Activated CD8-positive, alpha-beta T cell treated with anti-CD3 and anti-CD28 coated beads for 36 hours (primary cell): ENCODE measurements at regions of chr16 and their contacts with region 1.

Region 1: GRCh38 chr16:84726079-84726668 is 26.4 kb downstream of the USP10 start:
- DNase-seq: peak; percentile 92
- ATAC-seq: no peak
- H3K4me3 Mint-ChIP-seq: peak overlapping the region; percentile 25
- H3K27ac Mint-ChIP-seq: no peak overlapping the region
- H3K4me1 Mint-ChIP-seq: peaks cover 78% of the 10 kb centered on the region
- H3K27me3 Mint-ChIP-seq: no peaks in the 10 kb centered on the region
- CTCF ChIP-seq: peak; percentile 100

Region 2: DNA sequence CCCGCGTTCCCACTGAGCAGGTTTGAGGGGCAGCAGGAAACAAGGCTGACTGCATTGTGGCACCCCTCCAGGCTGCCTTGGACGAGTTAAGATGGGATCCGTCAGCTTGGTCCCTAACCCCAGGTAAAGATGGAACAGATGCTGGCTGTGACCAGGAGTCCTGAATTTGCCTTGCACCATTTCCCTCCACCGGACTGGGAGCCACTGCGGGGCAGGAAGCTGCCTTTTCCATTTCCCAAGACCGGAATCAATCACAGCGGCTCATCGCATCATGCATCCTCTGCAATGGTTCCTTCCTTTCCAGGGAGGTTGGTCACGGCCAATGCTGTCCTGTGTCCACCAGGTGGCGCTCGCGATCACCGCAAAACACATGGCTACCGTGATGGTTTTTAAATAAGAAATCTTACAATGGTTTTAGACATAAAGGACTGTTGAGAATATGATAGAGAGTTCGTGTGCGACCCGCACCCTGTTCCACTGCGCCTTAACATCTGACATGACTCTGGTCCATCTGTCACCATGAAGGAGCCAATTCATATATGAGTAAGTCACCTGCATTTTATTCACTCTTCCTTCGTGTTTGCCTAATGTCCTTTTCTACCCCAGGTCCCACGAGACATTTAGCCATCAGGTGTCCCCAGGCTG is 214.9 kb before region 1 on chr16:
- CTCF ChIA-PET with region 1: interaction called, 11 read pairs
- POLR2A ChIA-PET with region 1: no interaction called
- intact Hi-C with region 1: loop called (anchors 10 kb)
- DNase-seq: peak; percentile 92
- ATAC-seq: peak; percentile 9
- H3K4me3 Mint-ChIP-seq: peak overlapping the region; percentile 39
- H3K27ac Mint-ChIP-seq: peak overlapping the region; percentile 80
- H3K4me1 Mint-ChIP-seq: peaks cover 74% of the 10 kb centered on the region
- H3K27me3 Mint-ChIP-seq: no peaks in the 10 kb centered on the region
- CTCF ChIP-seq: peak; percentile 94

Region 3: DNA sequence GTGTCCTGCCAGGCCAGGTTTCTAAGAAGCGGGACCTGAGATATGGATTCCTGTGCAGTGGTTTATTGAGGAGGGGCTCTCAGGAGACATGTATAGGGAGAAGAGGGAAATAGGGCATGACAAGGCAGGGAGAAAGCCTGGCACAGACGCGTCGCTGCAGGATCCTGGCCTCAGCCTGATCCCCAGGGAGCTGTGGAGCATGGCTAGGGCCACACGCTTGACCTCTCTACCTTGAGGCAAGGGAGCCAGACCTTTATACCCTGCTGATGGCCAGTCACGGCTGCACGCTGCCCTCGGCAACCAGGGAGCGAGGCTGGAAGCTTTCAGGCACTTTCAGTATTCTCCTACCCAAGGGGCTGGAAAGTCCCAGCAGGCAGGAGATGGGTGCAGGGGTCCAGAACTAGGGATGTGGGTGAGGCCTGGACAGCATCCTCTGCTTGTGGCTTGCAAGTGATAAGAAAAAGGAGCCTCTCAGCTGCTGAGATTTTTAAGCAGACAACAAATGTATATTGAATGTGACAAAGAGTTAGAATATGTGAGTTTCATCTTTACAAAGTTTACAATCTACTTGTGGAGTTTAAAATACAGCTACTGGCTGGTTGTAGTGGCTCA is 87.9 kb before region 1 on chr16:
- CTCF ChIA-PET with region 1: interaction called, 10 read pairs
- POLR2A ChIA-PET with region 1: interaction called, 3 read pairs
- intact Hi-C with region 1: no loop called
- DNase-seq: no peak
- ATAC-seq: no peak
- H3K4me3 Mint-ChIP-seq: no peak overlapping the region
- H3K27ac Mint-ChIP-seq: no peak overlapping the region
- H3K4me1 Mint-ChIP-seq: peaks cover 31% of the 10 kb centered on the region
- H3K27me3 Mint-ChIP-seq: no peaks in the 10 kb centered on the region
- CTCF ChIP-seq: no peak

Region 4: DNA sequence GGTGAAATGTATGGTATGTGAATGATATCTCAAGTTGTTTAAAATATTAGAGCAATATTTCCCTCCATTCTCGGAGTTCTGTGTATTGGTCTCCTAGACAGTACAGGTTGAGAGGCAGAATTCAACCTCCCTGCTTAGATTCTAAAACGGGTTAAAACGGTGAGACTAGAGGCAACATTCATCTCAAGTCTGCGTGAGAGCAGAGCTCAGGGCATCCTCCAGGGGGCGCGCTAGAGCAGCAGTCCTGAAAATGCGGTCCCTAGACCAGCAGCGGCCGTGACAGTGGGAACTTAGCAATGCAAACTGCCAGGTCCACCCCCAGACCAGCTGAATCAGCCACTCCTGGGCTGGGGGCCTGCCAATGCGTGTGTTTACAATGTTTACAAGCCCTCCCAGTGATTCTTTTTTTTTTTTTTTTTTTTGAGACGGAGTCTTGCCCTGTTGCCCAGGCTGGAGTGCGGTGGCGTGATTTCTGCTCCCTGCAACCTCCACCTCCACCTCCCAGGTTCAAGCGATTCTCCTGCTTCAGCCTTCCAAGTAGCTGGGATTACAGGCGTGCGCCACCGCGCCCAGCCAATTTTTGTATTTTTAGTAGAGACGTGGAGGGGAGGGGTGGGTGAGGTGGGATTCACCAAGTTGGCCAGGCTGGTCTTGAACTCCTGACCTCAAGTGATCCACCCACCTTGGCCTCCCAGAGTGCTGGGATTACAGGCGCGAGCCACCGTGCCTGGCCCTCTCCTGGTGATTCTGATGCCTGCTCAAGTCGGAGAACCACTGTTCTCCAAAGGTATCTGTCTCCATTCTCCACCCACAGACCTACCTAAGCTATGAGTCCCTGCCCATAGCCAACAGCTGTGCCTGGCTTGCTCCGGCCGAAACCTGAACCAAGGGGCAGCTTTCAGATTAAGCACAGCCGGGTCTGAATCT is 53.6 kb before region 1 on chr16:
- CTCF ChIA-PET with region 1: interaction called, 70 read pairs
- POLR2A ChIA-PET with region 1: interaction called, 3 read pairs
- intact Hi-C with region 1: loop called (anchors 1 kb)
- DNase-seq: peak; percentile 86
- ATAC-seq: peak; percentile 97
- H3K4me3 Mint-ChIP-seq: no peak overlapping the region
- H3K27ac Mint-ChIP-seq: no peak overlapping the region
- H3K4me1 Mint-ChIP-seq: peaks cover 6% of the 10 kb centered on the region
- H3K27me3 Mint-ChIP-seq: no peaks in the 10 kb centered on the region
- CTCF ChIP-seq: peak; percentile 90

Region 5: DNA sequence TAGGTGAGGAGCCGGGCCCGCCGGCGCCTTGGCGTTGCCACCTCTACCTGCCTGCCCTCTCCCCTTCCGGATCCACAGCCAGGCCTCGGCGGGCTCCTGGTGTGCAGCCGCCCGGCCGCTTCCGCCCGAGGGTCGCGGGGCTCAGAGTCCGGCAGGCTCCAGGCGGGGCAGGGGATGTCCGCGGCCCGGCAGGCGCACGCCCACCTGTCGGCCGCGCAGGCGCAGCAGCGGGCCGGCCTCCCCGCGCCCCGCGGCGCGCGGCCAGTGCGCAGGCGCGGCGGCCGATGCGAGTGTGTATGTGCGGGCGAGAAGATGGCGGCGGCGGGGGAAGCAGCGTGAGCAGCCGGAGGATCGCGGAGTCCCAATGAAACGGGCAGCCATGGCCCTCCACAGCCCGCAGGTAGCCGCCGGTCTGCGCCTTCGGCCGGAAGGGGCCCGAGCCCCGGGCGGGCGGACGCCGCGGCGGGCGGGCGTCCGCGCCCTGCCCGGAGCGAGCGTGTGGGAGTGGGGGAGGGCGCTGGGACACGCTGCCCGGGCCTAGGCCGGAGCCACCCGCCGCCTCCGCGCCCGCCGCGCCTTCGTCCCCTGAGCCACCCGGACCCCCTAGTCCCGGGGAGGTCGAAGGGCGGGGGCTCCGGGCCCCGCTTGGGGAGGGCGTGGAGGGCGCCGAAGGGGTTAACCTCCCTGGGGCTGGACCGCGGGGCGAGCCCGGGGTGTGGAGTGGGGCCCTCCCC is 26.3 kb before region 1 on chr16 and contains the start of gene USP10:
- CTCF ChIA-PET with region 1: interaction called, 38 read pairs
- POLR2A ChIA-PET with region 1: interaction called, 5 read pairs
- intact Hi-C with region 1: no loop called
- DNase-seq: peak; percentile 85
- ATAC-seq: peak; percentile 84
- H3K4me3 Mint-ChIP-seq: peak within 1 kb of the TSS; percentile 98
- H3K27ac Mint-ChIP-seq: peak within 1 kb of the TSS; percentile 96
- H3K4me1 Mint-ChIP-seq: peaks cover 36% of the 10 kb centered on the region
- H3K27me3 Mint-ChIP-seq: no peaks in the 10 kb centered on the region
- CTCF ChIP-seq: no peak
- total RNA-seq, gene USP10: 116 TPM

Region 6: DNA sequence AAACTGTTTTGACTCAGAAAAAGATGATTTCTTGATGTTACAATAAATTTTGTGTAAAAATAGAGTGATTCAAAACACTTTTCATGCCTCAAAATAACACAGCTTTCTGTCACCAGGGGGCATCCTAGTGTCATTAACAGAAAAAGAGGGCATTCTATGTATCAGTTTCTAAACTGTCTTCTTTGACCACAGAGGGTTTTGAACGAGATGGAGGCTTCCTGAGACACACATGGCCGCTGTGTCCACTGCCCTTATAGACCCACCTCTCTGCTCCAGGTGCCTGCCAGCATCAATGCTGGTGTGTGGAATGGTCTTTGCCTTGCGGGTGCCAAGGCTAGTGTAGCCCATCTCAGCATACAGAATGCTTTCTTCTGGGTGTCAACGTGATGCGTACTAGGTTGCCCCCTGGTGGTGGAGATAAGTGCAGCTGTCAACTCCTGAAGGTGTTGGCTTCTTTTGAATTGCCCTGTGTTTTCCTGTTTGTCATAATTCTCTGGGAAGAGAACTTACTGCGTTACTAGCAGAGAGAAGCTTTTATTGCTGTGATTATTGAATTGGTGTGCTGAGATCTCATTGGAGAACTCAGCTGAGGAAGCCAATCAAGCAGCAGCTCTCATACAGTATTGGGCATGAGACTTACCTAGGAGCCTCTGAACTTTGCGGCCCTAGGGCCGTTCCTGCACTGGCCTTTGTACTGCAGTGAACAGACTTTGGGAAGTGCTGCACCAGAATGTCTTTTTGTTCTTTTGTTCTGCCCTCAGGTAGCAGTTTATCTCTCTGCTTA is 12.3 kb after region 1 on chr16:
- CTCF ChIA-PET with region 1: interaction called, 140 read pairs
- POLR2A ChIA-PET with region 1: interaction called, 4 read pairs
- intact Hi-C with region 1: no loop called
- DNase-seq: peak; percentile 89
- ATAC-seq: peak; percentile 85
- H3K4me3 Mint-ChIP-seq: no peak overlapping the region
- H3K27ac Mint-ChIP-seq: peak overlapping the region; percentile 13
- H3K4me1 Mint-ChIP-seq: peaks cover 60% of the 10 kb centered on the region
- H3K27me3 Mint-ChIP-seq: no peaks in the 10 kb centered on the region
- CTCF ChIP-seq: peak; percentile 94

Region 7: GRCh38 chr16:84836234-84836647 is 110.1 kb after region 1 on chr16:
- CTCF ChIA-PET with region 1: no interaction called
- POLR2A ChIA-PET with region 1: no interaction called
- intact Hi-C with region 1: no loop called
- DNase-seq: no peak
- ATAC-seq: no peak
- H3K4me3 Mint-ChIP-seq: no peak overlapping the region
- H3K27ac Mint-ChIP-seq: no peak overlapping the region
- H3K4me1 Mint-ChIP-seq: no peaks in the 10 kb centered on the region
- H3K27me3 Mint-ChIP-seq: peaks cover 10% of the 10 kb centered on the region
- CTCF ChIP-seq: no peak